CD4-positive, alpha-beta T cell (primary cell): ENCODE measurements at regions of chr2 and their contacts with region 1.

Region 1: GRCh38 chr2:169798718-169799592 is at the start of gene SSB:
- DNase-seq: peak; percentile 81 to 97 (median 92)
- ATAC-seq: peak; percentile 94
- H3K4me3 ChIP-seq: peak within 1 kb of the TSS; percentile 87
- H3K4me3 Mint-ChIP-seq: peak within 1 kb of the TSS; percentile 91
- H3K27ac ChIP-seq: peak within 1 kb of the TSS; percentile 86 to 87
- H3K27ac Mint-ChIP-seq: peak within 1 kb of the TSS; percentile 96
- H3K4me1 ChIP-seq: peaks cover 23% of the 10 kb centered on the region
- H3K4me1 Mint-ChIP-seq: peaks cover 46% of the 10 kb centered on the region
- H3K27me3 ChIP-seq: no peaks in the 10 kb centered on the region
- H3K27me3 Mint-ChIP-seq: no peaks in the 10 kb centered on the region
- CTCF ChIP-seq: no peak
- total RNA-seq, gene SSB: 174 to 181 TPM

Region 2: GRCh38 chr2:169579044-169579443 is 219.9 kb before region 1 on chr2:
- CTCF ChIA-PET with region 1: no interaction called
- POLR2A ChIA-PET with region 1: interaction called, 10 read pairs
- intact Hi-C with region 1: loop called in 1 of 2 experiments (anchors 5 kb)
- DNase-seq: no peak
- ATAC-seq: no peak
- H3K4me3 ChIP-seq: no peak overlapping the region
- H3K4me3 Mint-ChIP-seq: no peak overlapping the region
- H3K27ac ChIP-seq: no peak overlapping the region
- H3K27ac Mint-ChIP-seq: no peak overlapping the region
- H3K4me1 ChIP-seq: peaks cover 3% of the 10 kb centered on the region
- H3K4me1 Mint-ChIP-seq: peaks cover 4% of the 10 kb centered on the region
- H3K27me3 ChIP-seq: no peaks in the 10 kb centered on the region
- H3K27me3 Mint-ChIP-seq: peaks cover 10% of the 10 kb centered on the region
- CTCF ChIP-seq: no peak

Region 3: DNA sequence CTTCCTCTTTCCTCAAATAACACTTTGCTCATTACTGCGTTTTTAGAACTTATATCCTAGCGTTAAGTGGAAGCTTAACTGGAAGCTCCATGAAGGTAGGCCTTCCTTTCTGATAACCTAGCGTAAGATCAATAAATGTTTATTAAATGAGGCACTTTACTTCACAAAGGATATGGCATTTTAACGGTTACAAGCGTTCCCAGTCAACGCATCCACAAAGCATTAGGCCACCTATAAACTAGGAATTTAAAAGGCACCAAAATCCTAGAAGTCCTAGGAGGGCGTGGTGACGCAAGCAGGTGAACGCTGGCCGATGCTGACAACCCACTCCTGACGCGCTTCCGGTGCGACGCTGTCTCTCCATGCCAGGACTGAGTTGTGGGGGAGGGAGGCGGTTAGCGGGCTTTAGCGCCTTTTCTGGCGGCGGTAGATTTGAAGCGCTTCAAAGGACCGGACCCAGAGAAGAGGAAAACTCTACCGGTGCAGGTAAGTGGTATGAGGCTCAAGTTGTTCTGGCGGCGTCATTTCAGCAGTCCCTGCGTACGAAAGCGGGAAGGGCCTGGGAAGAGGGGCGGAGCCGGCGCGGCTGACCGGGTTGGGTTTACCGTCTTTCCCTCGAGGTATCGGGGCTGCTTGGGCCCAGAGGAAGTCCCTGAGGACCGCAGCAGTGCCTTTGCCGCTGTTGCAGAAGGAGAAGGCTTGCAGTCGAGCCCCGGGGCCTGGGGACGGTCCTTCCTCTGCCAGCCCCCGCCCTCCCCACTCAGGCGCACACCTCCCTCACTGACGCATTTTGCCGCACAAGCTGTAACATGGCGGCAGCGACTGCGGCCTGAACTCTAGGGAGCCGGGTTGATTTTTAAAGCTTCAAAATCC is 214.7 kb before region 1 on chr2 and contains the start of gene PPIG:
- CTCF ChIA-PET with region 1: no interaction called
- POLR2A ChIA-PET with region 1: interaction called, 10 read pairs
- intact Hi-C with region 1: loop called in 1 of 2 experiments (anchors 5 kb)
- DNase-seq: peak; percentile 73 to 96 (median 82)
- ATAC-seq: peak; percentile 92
- H3K4me3 ChIP-seq: peak within 1 kb of the TSS; percentile 81
- H3K4me3 Mint-ChIP-seq: peak within 1 kb of the TSS; percentile 98
- H3K27ac ChIP-seq: peak within 1 kb of the TSS; percentile 97 to 99
- H3K27ac Mint-ChIP-seq: peak within 1 kb of the TSS; percentile 99
- H3K4me1 ChIP-seq: peaks cover 24% of the 10 kb centered on the region
- H3K4me1 Mint-ChIP-seq: peaks cover 39% of the 10 kb centered on the region
- H3K27me3 ChIP-seq: no peaks in the 10 kb centered on the region
- H3K27me3 Mint-ChIP-seq: no peaks in the 10 kb centered on the region
- CTCF ChIP-seq: no peak
- total RNA-seq, gene PPIG: 83.4 to 87.8 TPM

Region 4: DNA sequence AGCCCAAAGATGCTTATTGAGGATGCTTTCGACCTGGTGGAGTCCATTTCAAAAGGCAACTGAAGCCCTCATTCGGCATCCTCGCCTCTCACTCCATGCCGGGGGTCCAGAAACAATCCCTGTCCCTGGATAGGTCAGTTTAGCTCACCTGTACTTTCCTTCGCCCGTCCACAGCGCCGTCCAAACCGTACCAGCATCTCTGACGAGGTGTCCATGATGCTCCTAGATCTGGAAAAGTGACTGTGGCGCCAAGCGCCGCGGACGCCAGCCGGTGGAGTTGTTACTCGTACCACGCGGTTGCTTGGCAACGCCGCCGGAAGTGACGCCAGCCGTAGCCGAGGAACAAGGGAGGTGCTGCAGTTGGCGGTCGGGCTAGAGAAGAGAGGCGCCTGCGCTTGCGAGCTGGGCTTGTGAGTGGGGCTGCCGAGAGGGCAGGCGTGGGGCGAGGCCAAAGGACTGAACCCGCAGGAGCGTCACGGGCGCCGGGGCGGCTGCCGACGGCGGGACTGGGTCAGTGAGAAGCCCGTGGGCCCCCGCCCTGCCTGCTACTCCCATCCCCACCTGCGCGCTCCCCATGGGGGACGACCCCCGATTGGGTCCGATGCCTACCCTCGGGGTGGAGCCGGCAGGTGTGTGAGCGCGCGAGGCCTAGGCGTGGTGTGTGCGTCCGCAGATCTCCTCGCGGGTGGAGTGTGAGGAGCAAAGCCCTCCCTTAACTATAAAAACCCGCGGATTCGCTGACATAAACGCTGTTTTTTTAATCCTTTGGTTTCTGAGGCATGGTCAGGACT is 104.6 kb before region 1 on chr2 and contains the starts of genes CFAP210 and PHOSPHO2:
- CTCF ChIA-PET with region 1: no interaction called
- POLR2A ChIA-PET with region 1: interaction called, 3 read pairs
- intact Hi-C with region 1: loop called in 1 of 2 experiments (anchors 5 kb)
- DNase-seq: peak; percentile 97 to 99 (median 99)
- ATAC-seq: peak; percentile 91
- H3K4me3 ChIP-seq: peak within 1 kb of the TSS; percentile 70
- H3K4me3 Mint-ChIP-seq: peak within 1 kb of the TSS; percentile 91
- H3K27ac ChIP-seq: peak within 1 kb of the TSS; percentile 80 to 91
- H3K27ac Mint-ChIP-seq: peak within 1 kb of the TSS; percentile 95
- H3K4me1 ChIP-seq: peaks cover 18% of the 10 kb centered on the region
- H3K4me1 Mint-ChIP-seq: peaks cover 18% of the 10 kb centered on the region
- H3K27me3 ChIP-seq: peaks cover 0 to 5% of the 10 kb centered on the region in 2 experiments
- H3K27me3 Mint-ChIP-seq: no peaks in the 10 kb centered on the region
- CTCF ChIP-seq: no peak
- total RNA-seq, gene CFAP210: 2.2 to 3.1 TPM
- total RNA-seq, gene PHOSPHO2: 4.5 to 6.5 TPM

Region 5: GRCh38 chr2:169815849-169816248 is 16.9 kb after region 1 on chr2:
- CTCF ChIA-PET with region 1: no interaction called
- POLR2A ChIA-PET with region 1: interaction called, 3 read pairs
- intact Hi-C with region 1: loop called in 1 of 2 experiments (anchors 2 kb)
- DNase-seq: no peak
- ATAC-seq: no peak
- H3K4me3 ChIP-seq: no peak overlapping the region
- H3K4me3 Mint-ChIP-seq: no peak overlapping the region
- H3K27ac ChIP-seq: no peak overlapping the region
- H3K27ac Mint-ChIP-seq: peak overlapping the region; percentile 33
- H3K4me1 ChIP-seq: no peaks in the 10 kb centered on the region
- H3K4me1 Mint-ChIP-seq: peaks cover 14% of the 10 kb centered on the region
- H3K27me3 ChIP-seq: no peaks in the 10 kb centered on the region
- H3K27me3 Mint-ChIP-seq: no peaks in the 10 kb centered on the region
- CTCF ChIP-seq: no peak